ENCODE measurements at regions of chr6 and their contacts with region 1.

Region 1: GRCh38 chr6:24855395-24856245 is 56.9 kb upstream of the ARMH2 start:
- DNase-seq: peak; percentile 75
- H3K4me3 Mint-ChIP-seq: no peak overlapping the region
- H3K27ac Mint-ChIP-seq: peak overlapping the region; percentile 90
- H3K4me1 Mint-ChIP-seq: peaks cover 55% of the 10 kb centered on the region
- H3K27me3 Mint-ChIP-seq: no peaks in the 10 kb centered on the region

Region 2: GRCh38 chr6:24564090-24564489 is 291.5 kb before region 1 on chr6:
- CTCF ChIA-PET with region 1: no interaction called
- POLR2A ChIA-PET with region 1: no interaction called
- DNase-seq: no peak
- H3K4me3 Mint-ChIP-seq: no peak overlapping the region
- H3K27ac Mint-ChIP-seq: no peak overlapping the region
- H3K4me1 Mint-ChIP-seq: no peaks in the 10 kb centered on the region
- H3K27me3 Mint-ChIP-seq: peaks cover 10% of the 10 kb centered on the region

Region 3: DNA sequence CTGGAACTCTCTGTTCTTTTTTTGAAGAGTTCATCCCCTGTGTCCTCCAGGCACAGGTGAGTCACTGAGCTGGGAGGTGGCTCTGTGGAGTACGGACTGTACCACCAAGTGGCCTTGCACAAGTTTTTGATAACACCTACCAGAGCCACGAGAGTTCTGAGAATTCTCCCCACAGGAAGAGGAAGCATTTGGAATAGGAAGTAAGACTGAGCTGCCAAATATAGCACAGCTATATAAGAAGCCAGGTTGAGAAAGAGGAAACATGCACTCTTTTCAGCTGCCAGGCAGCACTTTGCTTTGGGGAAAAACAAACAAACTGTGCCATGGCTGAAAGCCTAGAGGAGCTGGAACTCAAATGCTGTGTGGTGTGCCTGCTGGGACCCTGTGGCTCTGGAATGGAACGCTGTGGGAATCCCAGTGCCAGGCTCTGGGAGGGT is 151.0 kb after region 1 on chr6:
- CTCF ChIA-PET with region 1: interaction called, 20 read pairs
- POLR2A ChIA-PET with region 1: interaction called, 28 read pairs
- DNase-seq: peak; percentile 75
- H3K4me3 Mint-ChIP-seq: peak overlapping the region; percentile 50
- H3K27ac Mint-ChIP-seq: peak overlapping the region; percentile 92
- H3K4me1 Mint-ChIP-seq: peaks cover 79% of the 10 kb centered on the region
- H3K27me3 Mint-ChIP-seq: no peaks in the 10 kb centered on the region

Region 4: GRCh38 chr6:26445934-26446667 is 1590.5 kb after region 1 on chr6:
- CTCF ChIA-PET with region 1: no interaction called
- POLR2A ChIA-PET with region 1: no interaction called
- DNase-seq: peak; percentile 49
- H3K4me3 Mint-ChIP-seq: no peak overlapping the region
- H3K27ac Mint-ChIP-seq: peak overlapping the region; percentile 17
- H3K4me1 Mint-ChIP-seq: peaks cover 46% of the 10 kb centered on the region
- H3K27me3 Mint-ChIP-seq: no peaks in the 10 kb centered on the region

Measured in activated CD4-positive, alpha-beta memory T cell treated with anti-CD3 and anti-CD28 coated beads, Interleukin-2, amount 10 ng/mL, durations not matched to agents 7 days and 5 days (primary cell).